Heart left ventricle (tissue), 16 donors: ENCODE measurements at regions of chr18 and their contacts with region 1.

Region 1: GRCh38 chr18:72965611-72966010 is 97.8 kb upstream of the NETO1 start:
- DNase-seq: no peak
- ATAC-seq: no peak
- H3K4me3 ChIP-seq: no peak overlapping the region
- H3K27ac ChIP-seq: no peak overlapping the region
- H3K4me1 ChIP-seq: no peaks in the 10 kb centered on the region
- H3K27me3 ChIP-seq: no peaks in the 10 kb centered on the region
- CTCF ChIP-seq: no peak
- POLR2A ChIP-seq: no peak

Region 2: DNA sequence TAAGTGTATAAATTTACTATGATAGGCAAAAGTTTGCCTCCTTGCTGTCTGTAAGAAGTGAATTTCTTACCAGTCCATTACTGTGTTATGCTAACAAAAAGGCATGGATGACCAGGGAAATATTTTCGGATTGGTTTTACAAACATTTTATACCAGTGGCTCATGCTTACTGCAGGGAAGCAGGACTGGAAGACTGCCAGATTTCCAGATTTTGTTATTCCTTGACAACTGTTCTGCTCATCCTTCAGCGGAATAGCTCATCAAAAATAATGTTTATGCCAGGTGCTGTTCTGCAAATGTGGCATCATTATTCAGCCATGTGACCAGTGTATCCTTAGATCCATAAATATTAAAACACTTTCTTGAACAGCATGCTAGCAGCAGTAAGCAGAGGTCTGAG is 57.4 kb before region 1 on chr18:
- intact Hi-C with region 1: loop called in 1 of 10 experiments (anchors 10 kb)
- DNase-seq: no peak
- ATAC-seq: no peak
- H3K4me3 ChIP-seq: no peak overlapping the region
- H3K27ac ChIP-seq: no peak overlapping the region
- H3K4me1 ChIP-seq: no peaks in the 10 kb centered on the region
- H3K27me3 ChIP-seq: no peaks in the 10 kb centered on the region
- CTCF ChIP-seq: no peak
- POLR2A ChIP-seq: no peak